ENCODE measurements at regions of chr13 and their contacts with region 1.

Region 1: DNA sequence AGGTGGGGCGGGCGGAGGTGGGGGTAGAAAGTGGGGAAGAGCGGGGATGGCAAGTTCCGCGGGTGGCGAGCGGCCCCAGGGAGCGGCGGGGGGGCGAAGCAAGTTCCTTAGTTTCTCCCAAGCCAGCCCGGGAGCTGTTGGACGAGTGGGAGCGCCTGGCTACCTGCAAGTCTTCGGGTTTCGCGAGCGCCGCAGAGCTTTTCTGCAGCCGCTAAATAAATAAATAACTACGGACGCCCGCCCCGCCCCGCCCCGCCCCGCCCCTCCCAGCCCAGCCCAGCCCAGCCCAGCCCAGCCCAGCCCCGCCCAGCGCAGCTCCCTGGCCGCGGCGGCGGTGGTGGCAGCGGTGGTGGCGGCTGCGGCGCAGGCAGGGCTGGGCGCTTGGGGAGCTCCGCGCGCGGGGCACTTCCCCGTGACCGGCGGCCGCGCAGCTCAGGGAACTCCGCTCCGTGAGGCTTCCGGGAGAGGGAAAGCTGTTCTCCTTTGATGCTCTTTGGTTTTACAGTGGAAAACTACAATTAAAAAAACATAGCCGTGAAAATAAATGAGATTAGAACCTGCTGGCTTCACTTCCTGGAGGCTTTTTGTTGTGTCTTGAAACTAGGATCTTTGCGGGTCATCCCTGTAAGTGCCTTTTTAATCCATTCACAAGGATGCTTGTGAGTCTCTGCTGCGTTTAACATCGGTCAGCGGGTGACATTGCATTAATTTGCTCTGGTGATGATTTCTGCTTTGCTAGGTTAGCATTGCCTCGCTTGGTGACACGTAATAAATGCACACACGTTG is at the start of gene UBE2L5:
- DNase-seq: peak; percentile 65
- H3K4me3 ChIP-seq: peak within 1 kb of the TSS; percentile 54 to 81 (median 77)
- H3K27ac ChIP-seq: peak within 1 kb of the TSS; percentile 40
- H3K4me1 ChIP-seq: peaks cover 10% of the 10 kb centered on the region
- H3K27me3 ChIP-seq: no peaks in the 10 kb centered on the region
- CTCF ChIP-seq: no peak
- POLR2A ChIP-seq: peak; percentile 16
- total RNA-seq, gene UBE2L5: not detected in 2 replicates

Region 2: DNA sequence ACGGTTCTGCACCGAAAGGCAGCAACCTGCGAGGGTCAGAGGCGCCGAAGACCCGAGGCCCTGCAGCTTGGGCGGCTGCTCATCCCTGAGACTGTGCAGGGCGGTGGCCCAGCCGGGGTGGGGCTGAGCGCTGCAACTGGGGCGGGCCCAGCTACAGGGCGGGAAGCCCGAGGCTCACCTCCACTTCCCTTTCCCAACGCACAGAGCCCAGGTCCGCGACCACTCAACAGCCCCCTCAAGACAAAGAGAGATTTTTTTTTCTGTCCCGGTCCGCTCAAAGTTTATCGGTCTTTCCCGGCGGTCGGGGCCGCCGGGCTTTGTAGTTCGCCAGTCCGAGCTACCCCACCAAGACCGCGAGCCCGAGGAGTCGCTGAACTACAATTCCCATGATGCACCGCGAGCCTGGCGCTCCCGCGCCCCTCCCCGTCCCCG is 115.5 kb before region 1 on chr13:
- CTCF ChIA-PET with region 1: no interaction called
- POLR2A ChIA-PET with region 1: no interaction called
- dilution Hi-C with region 1: no loop called
- intact Hi-C with region 1: loop called (anchors 2 kb)
- DNase-seq: peak; percentile 90
- H3K4me3 ChIP-seq: peak overlapping the region; percentile 36 to 88 (median 77)
- H3K27ac ChIP-seq: peak overlapping the region; percentile 86
- H3K4me1 ChIP-seq: peaks cover 24% of the 10 kb centered on the region
- H3K27me3 ChIP-seq: no peaks in the 10 kb centered on the region
- CTCF ChIP-seq: no peak
- POLR2A ChIP-seq: peak; percentile 50

Region 3: DNA sequence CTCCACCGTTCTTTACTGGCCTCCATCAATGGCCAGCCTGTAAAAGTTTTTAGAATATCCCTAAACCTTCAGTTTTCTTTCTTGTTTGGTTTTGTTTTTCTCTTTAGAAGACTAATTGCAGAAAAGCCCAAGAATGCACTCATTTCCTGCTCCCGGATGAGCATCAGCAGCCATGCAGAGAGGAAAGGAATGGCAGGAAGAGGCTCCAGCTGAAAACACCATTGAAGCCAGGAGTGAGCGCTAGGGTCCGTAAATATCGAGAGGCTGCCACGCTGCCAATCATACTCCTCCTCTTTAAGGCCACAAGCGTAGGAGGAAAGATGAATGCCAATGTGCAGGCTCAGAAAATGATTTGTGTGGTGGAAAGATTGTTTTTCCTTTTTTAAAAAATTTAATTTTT is 57.4 kb before region 1 on chr13:
- CTCF ChIA-PET with region 1: no interaction called
- POLR2A ChIA-PET with region 1: no interaction called
- dilution Hi-C with region 1: no loop called
- intact Hi-C with region 1: loop called (anchors 2 kb)
- DNase-seq: peak; percentile 95
- H3K4me3 ChIP-seq: peak overlapping the region in 1 of 3 experiments; percentile 29
- H3K27ac ChIP-seq: peak overlapping the region; percentile 95
- H3K4me1 ChIP-seq: peaks cover 30% of the 10 kb centered on the region
- H3K27me3 ChIP-seq: no peaks in the 10 kb centered on the region
- CTCF ChIP-seq: no peak
- POLR2A ChIP-seq: peak; percentile 61

Region 4: DNA sequence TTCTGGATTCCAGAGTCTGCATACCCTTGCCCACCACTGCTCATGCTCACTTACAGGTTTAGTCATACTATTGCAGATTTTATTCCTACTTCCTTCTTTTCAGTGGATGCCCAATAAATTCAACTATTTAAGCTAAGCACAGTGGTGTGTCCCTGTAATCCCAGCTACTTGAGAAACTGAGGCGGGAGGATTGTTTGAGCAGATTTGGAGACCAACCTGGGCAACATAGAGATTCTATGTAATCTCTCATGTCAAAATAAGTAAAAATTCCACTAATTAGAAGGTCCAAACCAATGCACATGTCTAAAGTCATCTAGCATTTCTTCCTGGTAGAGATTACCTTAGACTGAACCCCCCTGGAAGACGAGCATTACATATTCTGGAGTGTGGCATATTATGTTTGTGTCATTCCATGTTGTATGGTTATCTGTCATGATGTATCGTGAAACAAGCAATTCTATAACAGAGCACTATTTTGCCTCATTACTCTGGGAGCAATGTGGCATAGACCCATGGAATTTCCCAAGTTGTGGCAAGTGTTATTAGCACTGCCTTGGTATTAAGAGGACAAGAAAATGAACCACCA is 35.2 kb after region 1 on chr13:
- CTCF ChIA-PET with region 1: no interaction called
- POLR2A ChIA-PET with region 1: interaction called, 3 read pairs
- dilution Hi-C with region 1: no loop called
- intact Hi-C with region 1: loop called (anchors 5 kb)
- DNase-seq: no peak
- H3K4me3 ChIP-seq: no peak overlapping the region
- H3K27ac ChIP-seq: no peak overlapping the region
- H3K4me1 ChIP-seq: peaks cover 7% of the 10 kb centered on the region
- H3K27me3 ChIP-seq: no peaks in the 10 kb centered on the region
- CTCF ChIP-seq: no peak
- POLR2A ChIP-seq: no peak

Region 5: GRCh38 chr13:31073859-31074718 is 651.8 kb after region 1 on chr13:
- CTCF ChIA-PET with region 1: no interaction called
- POLR2A ChIA-PET with region 1: no interaction called
- dilution Hi-C with region 1: no loop called
- intact Hi-C with region 1: no loop called
- DNase-seq: no peak
- H3K4me3 ChIP-seq: no peak overlapping the region
- H3K27ac ChIP-seq: no peak overlapping the region
- H3K4me1 ChIP-seq: no peaks in the 10 kb centered on the region
- H3K27me3 ChIP-seq: peaks cover 2 to 6% of the 10 kb centered on the region in 2 experiments
- CTCF ChIP-seq: no peak
- POLR2A ChIP-seq: no peak